ENCODE measurements at regions of chr9 and their contacts with region 1.

Region 1: DNA sequence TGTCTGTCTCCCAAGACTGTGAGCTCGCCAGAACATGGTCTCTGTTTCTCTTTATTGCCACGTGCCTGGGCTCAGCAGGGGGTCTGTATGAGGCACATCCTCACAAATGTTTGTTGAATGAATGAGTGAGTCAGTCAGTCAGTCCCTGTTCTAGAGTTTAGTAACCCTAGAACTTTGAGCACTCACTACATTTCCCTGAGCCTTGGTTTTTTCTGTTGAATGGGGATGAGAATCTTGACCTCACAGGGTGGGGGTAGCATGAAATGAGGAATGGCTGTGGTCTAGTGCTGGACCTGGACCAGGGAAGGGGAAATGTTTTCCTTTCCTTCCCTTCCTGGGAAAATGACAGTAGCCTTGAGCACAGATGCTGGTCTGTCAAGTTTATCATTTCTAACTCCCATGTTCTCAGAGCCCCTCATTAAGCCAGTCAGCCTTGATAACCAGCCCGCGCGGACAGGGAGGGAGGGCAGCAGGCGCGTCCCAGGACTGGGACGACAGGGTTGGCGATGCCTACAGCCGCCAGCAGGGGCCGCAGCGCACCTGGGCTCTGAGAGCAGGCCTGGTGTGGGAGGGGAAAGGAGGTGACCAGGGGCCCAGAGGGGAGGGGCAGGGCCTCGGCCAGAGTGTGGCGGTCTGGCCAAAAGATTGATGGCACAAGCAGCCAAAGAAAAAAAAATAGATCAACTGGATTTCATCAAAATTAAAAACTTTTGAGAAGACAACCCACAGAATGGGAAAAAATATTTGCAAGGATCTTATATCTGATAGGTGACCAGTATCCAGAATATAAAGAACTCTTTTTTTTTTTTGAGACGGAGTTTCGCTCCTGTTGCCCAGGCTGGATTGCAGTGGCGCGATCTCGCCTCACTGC is 24.1 kb upstream of the WNK2 start:
- DNase-seq: peak; percentile 69 to 89
- ATAC-seq: peak; percentile 98

Region 2: DNA sequence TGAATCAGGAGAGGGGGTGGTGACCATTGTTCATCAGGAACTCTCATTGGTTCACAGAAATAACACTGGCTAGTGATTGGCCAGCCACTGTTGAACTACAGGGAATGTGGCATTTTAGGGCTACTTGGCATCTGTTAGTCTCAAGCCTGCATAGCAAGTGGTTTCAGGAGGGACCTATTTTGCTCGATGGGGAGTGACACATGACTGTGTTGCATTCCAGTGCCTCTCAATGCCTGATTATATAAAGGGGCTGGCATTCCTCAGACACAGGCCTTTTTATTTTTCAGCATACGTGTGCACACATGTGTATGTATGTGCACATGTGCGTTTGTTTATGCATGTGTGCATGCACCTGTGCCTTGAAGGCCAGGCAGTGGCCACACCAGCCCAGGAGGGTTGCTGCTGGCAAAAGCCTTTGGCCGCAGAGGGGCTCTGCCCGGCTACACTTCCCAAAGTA is 189.3 kb before region 1 on chr9:
- intact Hi-C with region 1: no loop called
- DNase-seq: no peak
- ATAC-seq: no peak

Region 3: GRCh38 chr9:93302551-93303257 is 142.9 kb after region 1 on chr9:
- intact Hi-C with region 1: loop called in 1 of 2 experiments (anchors 10 kb)
- DNase-seq: peak; percentile 68 to 80
- ATAC-seq: peak; percentile 36